ENCODE measurements at regions of chr1 and their contacts with region 1.

Region 1: GRCh38 chr1:173429471-173430402 is 47.4 kb upstream of the PRDX6 start:
- DNase-seq: peak; percentile 81 to 91
- ATAC-seq: peak; percentile 96 to 99 (median 98)
- H3K4me3 ChIP-seq: peak overlapping the region in 8 of 10 donors; percentile 0 to 41 (median 32)
- H3K27ac ChIP-seq: peak overlapping the region; percentile 68 to 93 (median 84)
- H3K4me1 ChIP-seq: peaks cover 5 to 33% (median 29%) of the 10 kb centered on the region in 9 donors
- H3K27me3 ChIP-seq: no peaks in the 10 kb centered on the region
- CTCF ChIP-seq: peak; percentile 27 to 77 (median 59)

Region 2: GRCh38 chr1:172745014-172745413 is 684.7 kb before region 1 on chr1:
- intact Hi-C with region 1: loop called in 3 of 10 experiments (anchors 10 kb)
- DNase-seq: peak in 1 of 2 donors; percentile 33
- ATAC-seq: peak in 7 of 8 donors; percentile 56 to 81 (median 77)
- H3K4me3 ChIP-seq: no peak overlapping the region
- H3K27ac ChIP-seq: no peak overlapping the region
- H3K4me1 ChIP-seq: peaks cover 0 to 26% (median 5%) of the 10 kb centered on the region in 9 donors
- H3K27me3 ChIP-seq: peaks cover 0 to 11% (median 0%) of the 10 kb centered on the region in 7 donors
- CTCF ChIP-seq: peak in 8 of 9 donors; percentile 20 to 73 (median 58)

Region 3: GRCh38 chr1:173476664-173477285 is 47.0 kb after region 1 on chr1:
- intact Hi-C with region 1: loop called in 7 of 10 experiments (anchors 2 to 5 kb)
- DNase-seq: peak; percentile 91 to 92
- ATAC-seq: peak; percentile 89 to 96 (median 91)
- H3K4me3 ChIP-seq: peak overlapping the region; percentile 56 to 95 (median 90)
- H3K27ac ChIP-seq: peak overlapping the region; percentile 64 to 99 (median 96)
- H3K4me1 ChIP-seq: peaks cover 4 to 76% (median 46%) of the 10 kb centered on the region in 9 donors
- H3K27me3 ChIP-seq: no peaks in the 10 kb centered on the region
- CTCF ChIP-seq: peak in 3 of 9 donors; percentile 9 to 36 (median 20)

Region 4: DNA sequence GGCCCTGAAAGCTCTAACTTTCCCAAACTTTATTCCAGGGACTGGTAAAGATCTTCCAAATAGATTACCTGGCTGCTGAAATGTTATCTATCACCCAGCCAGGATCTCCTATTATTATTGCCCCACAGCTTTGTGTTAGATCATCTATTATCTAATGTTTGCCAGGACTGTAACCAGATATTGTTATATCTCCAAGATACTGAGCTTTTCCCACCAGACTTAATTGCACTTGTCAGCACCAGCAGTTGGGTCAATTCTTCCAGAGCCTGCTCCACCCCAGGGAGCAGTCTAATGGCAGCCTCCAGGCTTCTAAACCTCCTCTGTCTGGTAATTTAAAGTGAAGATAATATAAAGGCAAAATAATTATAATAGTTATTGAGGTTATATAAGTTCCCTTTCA is 106.5 kb after region 1 on chr1:
- intact Hi-C with region 1: no loop called
- DNase-seq: no peak
- ATAC-seq: no peak
- H3K4me3 ChIP-seq: no peak overlapping the region
- H3K27ac ChIP-seq: no peak overlapping the region
- H3K4me1 ChIP-seq: peaks cover 0 to 6% (median 0%) of the 10 kb centered on the region in 9 donors
- H3K27me3 ChIP-seq: no peaks in the 10 kb centered on the region
- CTCF ChIP-seq: no peak

Region 5: GRCh38 chr1:173714759-173715537 is 285.2 kb after region 1 on chr1 and contains the start of gene KLHL20:
- intact Hi-C with region 1: loop called in 6 of 10 experiments (anchors 2 to 10 kb)
- DNase-seq: peak; percentile 73 to 84
- ATAC-seq: peak; percentile 95 to 99 (median 99)
- H3K4me3 ChIP-seq: peak within 1 kb of the TSS; percentile 65 to 96 (median 84)
- H3K27ac ChIP-seq: peak within 1 kb of the TSS; percentile 75 to 95 (median 92)
- H3K4me1 ChIP-seq: peaks cover 0 to 30% (median 25%) of the 10 kb centered on the region in 9 donors
- H3K27me3 ChIP-seq: peaks cover 0 to 29% (median 13%) of the 10 kb centered on the region in 7 donors
- CTCF ChIP-seq: peak in 1 of 9 donors; percentile 20
- total RNA-seq, gene KLHL20: 14.5 to 19.4 (median 17.3) TPM

Region 6: DNA sequence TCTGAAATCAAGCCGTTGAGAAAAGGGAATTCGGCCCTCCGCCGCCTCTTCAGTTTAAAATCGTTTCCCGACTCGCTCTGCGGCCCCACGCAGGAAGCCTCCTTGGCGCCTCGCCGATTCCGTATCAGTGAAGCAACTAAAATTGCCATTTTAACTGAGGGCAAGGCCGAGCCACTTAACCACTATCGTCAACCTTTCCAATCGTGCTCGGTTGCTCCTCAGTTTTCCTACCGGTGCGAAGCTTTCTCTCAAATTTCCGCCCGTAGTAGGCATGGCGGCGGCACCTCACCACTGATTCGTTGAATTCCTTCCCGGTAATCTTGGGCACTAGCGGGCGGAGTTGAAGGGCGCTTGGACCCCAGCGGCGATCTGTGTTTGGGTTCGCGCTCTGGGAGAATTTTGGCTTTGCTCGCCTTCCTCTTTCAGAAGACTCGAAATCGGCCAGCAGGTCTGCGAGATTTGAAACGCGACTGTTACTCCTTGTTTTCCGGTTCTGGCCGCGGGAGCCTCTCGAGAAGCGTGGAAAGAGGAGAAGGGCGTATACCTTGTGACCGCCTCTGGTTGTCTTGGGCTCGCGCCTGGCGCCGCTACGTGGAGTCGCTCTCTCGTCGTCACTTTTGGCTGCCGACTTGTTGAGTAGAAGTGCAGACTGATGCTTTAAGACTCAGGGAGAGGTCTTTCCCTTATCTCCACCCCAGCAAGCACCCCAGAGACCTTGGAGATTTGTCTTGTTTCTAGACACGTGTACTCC is 394.8 kb after region 1 on chr1 and contains the starts of genes CENPL and DARS2:
- intact Hi-C with region 1: loop called in 9 of 10 experiments (anchors 1 to 10 kb)
- DNase-seq: peak; percentile 96 to 98
- ATAC-seq: peak; percentile 96 to 100 (median 99)
- H3K4me3 ChIP-seq: peak within 1 kb of the TSS; percentile 56 to 93 (median 71)
- H3K27ac ChIP-seq: peak within 1 kb of the TSS; percentile 77 to 95 (median 92)
- H3K4me1 ChIP-seq: peaks cover 0 to 36% (median 7%) of the 10 kb centered on the region in 9 donors
- H3K27me3 ChIP-seq: no peaks in the 10 kb centered on the region
- CTCF ChIP-seq: no peak
- total RNA-seq, gene CENPL: 2.4 to 7.0 (median 3.5) TPM
- total RNA-seq, gene DARS2: 11.3 to 22.8 (median 16.0) TPM

Region 7: DNA sequence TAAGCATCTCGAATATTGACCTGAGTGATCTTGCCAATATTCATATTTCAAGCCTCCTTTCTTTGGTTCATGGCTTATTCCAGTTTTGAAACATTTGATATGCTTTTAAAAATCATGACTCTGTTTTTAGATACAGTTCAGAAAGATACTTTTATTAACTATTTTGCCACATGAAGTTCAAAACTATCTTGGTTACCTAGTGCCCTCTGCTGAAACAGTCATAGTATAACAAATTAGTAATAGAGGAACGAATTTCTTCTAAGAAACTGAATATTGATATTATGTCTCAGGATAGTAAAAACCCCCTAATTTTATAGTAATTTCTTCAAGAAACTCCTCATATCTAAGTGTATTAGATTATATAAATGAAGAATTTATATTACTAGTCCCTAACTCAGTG is 645.0 kb after region 1 on chr1:
- intact Hi-C with region 1: loop called in 2 of 10 experiments (anchors 10 kb)
- DNase-seq: no peak
- ATAC-seq: no peak
- H3K4me3 ChIP-seq: no peak overlapping the region
- H3K27ac ChIP-seq: no peak overlapping the region
- H3K4me1 ChIP-seq: peaks cover 0 to 5% (median 0%) of the 10 kb centered on the region in 9 donors
- H3K27me3 ChIP-seq: no peaks in the 10 kb centered on the region
- CTCF ChIP-seq: peak in 8 of 9 donors; percentile 19 to 65 (median 53)

Region 8: DNA sequence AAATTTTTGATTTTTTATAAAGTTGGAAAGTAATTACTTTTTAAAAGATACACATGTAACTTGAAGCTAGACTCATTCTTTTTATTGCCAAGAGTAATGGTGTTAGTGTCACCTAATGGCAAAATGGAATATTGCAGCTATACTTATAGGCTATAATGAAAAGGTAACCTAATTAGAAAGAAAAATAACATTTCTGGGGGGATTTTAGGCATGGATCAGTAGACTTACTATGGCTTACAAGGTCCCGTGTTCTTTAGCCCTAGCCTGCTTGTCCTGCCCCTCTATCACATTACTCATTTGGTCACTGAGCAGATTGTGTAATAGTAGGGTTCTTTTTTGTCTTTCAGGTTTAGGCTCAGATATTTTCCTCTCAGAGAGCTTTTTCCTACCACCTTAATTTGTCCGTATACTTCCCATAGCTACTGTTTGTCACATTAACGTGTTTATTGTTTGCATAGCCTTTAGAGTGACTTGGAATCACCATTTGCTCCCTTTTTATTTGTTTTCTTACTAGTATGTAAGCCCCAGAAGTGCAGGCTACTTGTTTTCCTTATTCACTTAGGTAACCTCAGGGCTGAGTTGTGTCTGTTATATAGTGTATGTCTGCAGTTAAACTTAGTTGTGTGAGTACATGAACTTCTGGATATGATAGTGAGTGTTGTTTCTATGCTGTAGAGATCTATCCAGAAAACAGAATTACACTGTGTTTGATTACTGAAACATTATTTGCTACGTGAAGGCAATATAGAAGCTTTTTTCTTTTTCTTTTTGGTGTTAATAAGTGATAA is 788.2 kb after region 1 on chr1:
- intact Hi-C with region 1: loop called in 1 of 10 experiments (anchors 10 kb)
- DNase-seq: no peak
- ATAC-seq: peak in 7 of 8 donors; percentile 16 to 74 (median 52)
- H3K4me3 ChIP-seq: no peak overlapping the region
- H3K27ac ChIP-seq: peak overlapping the region in 1 of 10 donors; percentile 35
- H3K4me1 ChIP-seq: peaks cover 0 to 21% (median 8%) of the 10 kb centered on the region in 9 donors
- H3K27me3 ChIP-seq: no peaks in the 10 kb centered on the region
- CTCF ChIP-seq: peak; percentile 51 to 84 (median 75)

Measured in heart right ventricle (tissue), 16 donors.